Left ventricle myocardium superior (tissue), 1 donor: ENCODE measurements at regions of chr7 and their contacts with region 1.

Region 1: DNA sequence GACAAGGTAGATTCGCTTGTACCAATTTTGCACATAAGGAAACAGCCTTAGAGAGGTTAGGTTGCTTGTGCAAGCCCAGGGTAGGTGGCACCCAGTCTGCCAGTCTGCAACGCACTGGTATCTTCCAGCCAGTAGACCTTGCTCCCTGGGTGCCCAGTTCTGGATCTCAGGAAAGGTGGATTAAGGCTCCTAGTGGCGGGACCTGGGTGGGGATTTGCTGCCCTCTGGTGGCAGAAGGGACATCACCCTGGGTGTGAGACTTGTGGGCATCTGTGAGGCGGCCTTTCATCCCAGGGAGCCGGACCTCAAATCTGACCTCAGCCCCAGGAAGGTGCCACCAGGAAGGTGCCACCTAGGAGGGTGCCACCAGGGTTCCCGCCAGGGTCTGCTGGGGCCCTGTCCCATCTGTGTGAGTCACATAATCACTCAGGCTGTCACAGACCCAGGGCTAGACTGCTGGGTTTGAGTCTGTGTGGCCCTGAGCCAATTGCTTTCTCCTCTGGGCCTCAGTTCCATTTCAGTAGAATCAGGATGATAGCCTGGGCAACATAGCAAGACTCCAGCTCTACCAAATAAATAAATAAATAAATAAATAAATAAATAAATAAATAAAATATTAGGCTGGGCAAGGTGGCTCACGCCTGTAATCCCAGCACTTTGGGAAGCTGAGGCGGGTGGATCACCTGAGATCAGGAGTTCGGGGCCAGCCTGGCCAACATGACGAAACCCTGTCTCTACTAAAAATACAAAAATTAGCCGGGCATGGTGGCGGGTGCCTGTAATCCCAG is 5.3 kb upstream of the PRKRIP1 start:
- DNase-seq: peak; percentile 84
- ATAC-seq: peak; percentile 83

Region 2: DNA sequence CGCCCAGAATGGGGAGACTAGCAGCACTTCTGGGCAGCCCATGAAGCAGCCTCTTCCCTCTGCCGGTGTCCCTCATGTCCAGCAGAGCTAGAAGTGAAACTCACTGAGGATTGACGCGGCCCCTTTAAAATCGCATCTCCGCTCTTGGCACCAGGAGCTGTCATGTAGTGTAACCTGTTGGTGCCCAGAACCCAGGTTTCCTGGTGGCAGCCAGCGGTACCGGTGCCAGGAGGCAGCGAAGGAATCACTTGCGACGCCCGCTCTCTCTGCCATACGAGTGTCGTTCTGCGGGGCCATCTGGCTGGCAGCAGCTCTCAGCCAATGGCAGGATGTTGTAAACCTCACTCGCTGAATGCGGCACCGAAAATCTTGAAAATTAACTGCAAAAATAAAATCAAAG is 490.8 kb before region 1 on chr7:
- intact Hi-C with region 1: no loop called
- DNase-seq: peak; percentile 84
- ATAC-seq: peak; percentile 82

Region 3: DNA sequence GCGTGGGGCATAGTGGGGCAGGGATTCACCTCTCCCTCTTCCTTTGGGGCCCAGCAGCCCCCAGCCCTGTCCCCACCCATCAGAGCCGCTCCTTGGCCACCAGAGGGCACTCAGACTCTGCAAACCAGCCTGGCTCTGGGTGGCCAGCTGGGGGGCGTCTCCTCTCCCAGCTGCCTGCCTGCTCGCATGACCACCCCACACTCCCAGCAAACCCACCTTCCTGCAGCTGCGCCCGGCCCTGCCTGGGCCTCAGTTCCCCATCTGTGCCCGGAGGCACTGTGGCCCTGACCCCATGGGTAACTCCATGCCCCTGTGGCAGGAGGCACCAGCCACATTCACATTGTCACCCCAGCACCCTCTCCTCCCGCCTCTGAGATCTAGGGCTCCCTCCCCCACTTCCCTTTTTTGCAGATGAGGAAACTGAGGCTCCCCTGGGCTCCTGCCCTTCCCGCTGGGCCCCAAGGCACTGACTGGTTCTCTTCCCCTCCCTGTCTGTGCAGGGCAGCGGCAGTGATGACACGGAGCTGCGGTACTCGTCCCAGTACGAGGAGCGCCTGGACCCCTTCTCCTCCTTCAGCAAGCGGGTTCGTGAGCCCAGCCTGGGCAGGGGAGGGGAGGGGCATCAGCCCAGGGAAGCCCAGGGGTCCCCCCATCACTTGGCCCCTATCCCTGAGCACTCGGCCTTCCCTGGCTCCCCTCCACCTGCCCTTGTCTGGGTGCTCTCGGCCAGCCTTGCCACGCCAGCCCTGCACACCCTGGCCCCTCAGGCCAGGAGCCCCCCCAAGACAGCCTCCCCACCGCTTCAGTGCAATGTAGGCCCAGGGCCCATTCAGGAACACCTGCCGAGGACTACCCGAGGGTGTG is 111.1 kb before region 1 on chr7:
- intact Hi-C with region 1: loop called (anchors 5 kb)
- DNase-seq: peak; percentile 57
- ATAC-seq: peak; percentile 80